ENCODE measurements at regions of chr2 and their contacts with region 1.

Region 1: GRCh38 chr2:131492418-131493198 is 411 bp upstream of the MZT2A start:
- DNase-seq: peak; percentile 96
- H3K4me3 Mint-ChIP-seq: peak overlapping the region; percentile 98
- H3K27ac Mint-ChIP-seq: peak overlapping the region; percentile 95
- H3K4me1 Mint-ChIP-seq: peaks cover 43% of the 10 kb centered on the region
- H3K27me3 Mint-ChIP-seq: no peaks in the 10 kb centered on the region

Region 2: GRCh38 chr2:131105156-131105949 is 387.3 kb before region 1 on chr2 and contains the start of gene PLEKHB2:
- CTCF ChIA-PET with region 1: interaction called, 6 read pairs
- POLR2A ChIA-PET with region 1: no interaction called
- intact Hi-C with region 1: loop called (anchors 2 kb)
- DNase-seq: peak; percentile 95
- H3K4me3 Mint-ChIP-seq: peak within 1 kb of the TSS; percentile 85
- H3K27ac Mint-ChIP-seq: peak within 1 kb of the TSS; percentile 89
- H3K4me1 Mint-ChIP-seq: peaks cover 42% of the 10 kb centered on the region
- H3K27me3 Mint-ChIP-seq: no peaks in the 10 kb centered on the region
- total RNA-seq, gene PLEKHB2: 50.0 to 52.2 TPM

Region 3: GRCh38 chr2:131413148-131413747 is 79.4 kb before region 1 on chr2:
- CTCF ChIA-PET with region 1: interaction called, 6 read pairs
- POLR2A ChIA-PET with region 1: no interaction called
- intact Hi-C with region 1: loop called (anchors 2 kb)
- DNase-seq: no peak
- H3K4me3 Mint-ChIP-seq: no peak overlapping the region
- H3K27ac Mint-ChIP-seq: no peak overlapping the region
- H3K4me1 Mint-ChIP-seq: no peaks in the 10 kb centered on the region
- H3K27me3 Mint-ChIP-seq: peaks cover 49% of the 10 kb centered on the region

Region 4: DNA sequence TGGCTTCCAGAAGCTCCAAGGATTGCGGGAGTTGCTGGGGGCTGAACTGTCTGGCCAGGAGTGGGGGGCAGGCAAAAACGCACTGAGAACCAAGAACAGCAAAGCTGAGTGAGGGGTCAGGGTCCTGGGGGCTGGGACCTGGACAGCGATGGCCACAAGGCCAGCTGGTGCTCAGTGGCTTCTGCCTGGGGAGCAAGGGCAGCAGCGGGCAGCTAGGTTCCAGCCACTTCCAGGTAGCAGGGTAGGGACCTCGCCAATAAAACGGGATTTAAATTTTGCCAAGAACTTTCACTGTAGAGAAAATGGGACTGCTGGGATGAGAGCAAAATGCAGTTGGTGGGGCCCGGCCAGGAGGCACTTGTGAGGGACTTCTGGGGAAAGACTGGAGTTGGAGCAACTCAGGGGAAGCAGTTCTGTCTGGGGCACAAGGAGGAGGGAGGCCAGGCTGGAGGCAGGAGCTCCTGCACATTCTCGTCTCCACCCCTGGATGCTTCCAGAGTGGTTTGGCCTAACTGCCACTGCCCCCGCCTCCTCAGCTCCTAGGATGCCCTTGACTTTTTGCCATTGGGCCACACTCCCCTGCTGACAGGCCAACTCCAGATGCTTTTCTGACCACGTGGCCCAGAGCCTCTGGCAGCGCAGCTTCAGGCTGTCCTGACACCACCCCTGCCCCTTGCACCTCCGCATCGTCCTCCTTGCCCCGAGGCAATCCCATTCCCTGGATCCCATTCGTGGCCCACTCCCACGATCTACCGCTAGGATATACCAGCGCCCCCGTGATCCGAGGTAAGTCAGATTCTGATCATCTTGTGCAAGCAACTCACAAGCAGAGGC is 29.6 kb after region 1 on chr2:
- CTCF ChIA-PET with region 1: no interaction called
- POLR2A ChIA-PET with region 1: no interaction called
- intact Hi-C with region 1: loop called (anchors 1 kb)
- DNase-seq: no peak
- H3K4me3 Mint-ChIP-seq: no peak overlapping the region
- H3K27ac Mint-ChIP-seq: no peak overlapping the region
- H3K4me1 Mint-ChIP-seq: peaks cover 2% of the 10 kb centered on the region
- H3K27me3 Mint-ChIP-seq: no peaks in the 10 kb centered on the region

Region 5: DNA sequence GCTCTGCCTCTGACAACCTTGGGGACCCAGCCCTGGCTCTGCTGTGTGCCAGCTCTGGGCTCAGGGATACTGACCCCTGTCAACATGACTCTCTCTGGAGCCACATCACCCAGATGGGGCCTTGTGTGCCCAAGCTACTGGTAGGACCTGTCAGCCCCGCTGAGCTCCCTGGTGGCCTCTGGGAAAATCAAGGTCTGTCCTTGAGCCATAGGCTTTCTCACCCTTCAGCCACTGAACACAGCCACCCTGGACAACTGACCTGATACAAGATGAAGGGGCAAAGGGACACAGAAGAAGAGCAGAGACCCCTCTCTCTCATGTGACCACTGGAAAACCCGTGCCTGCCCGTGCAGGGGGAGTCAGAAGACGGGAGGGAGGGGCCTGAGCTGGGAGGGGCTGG is 42.9 kb after region 1 on chr2:
- CTCF ChIA-PET with region 1: no interaction called
- POLR2A ChIA-PET with region 1: no interaction called
- intact Hi-C with region 1: no loop called
- DNase-seq: no peak
- H3K4me3 Mint-ChIP-seq: no peak overlapping the region
- H3K27ac Mint-ChIP-seq: no peak overlapping the region
- H3K4me1 Mint-ChIP-seq: no peaks in the 10 kb centered on the region
- H3K27me3 Mint-ChIP-seq: no peaks in the 10 kb centered on the region

Region 6: DNA sequence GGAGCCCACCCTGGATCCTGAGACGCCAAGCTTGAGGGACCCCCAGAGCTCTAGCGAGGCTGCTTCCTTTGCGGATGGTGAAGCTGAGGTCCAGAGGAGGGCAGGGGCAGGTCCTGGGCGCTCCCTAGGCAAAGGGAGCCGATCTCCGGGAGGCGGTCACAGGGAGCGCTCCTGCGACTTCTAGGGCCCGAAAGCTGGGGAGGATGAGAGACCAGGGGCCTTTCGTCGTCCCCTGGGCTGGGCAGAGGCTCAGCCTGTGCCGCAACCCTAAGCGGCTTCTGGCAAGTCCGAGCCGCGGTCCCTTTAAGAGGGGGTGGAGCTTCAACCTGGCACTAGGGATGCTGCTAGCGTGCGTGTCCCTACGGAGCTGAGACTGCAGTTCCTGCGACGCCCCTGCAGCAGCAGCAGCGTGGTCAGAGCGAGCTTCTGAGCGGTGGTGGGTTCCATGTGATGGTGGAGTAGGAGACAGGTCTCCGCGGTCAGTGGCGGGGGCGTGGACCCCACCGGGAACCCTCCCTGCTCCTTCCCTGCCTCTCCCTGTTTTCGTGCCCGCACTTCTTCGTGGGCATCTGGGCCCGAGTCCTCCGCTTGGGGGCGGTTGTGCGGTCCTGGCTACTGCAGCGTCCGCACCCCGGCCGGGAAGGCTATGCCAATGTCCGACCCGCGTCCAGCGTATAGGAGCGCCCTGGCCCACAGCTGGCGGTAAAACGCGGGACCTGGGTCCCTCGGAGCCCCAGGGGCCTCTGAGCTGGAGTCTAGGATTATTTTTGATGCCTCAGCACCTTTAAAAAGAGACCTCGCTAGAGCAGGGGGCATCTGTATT is 189.7 kb after region 1 on chr2:
- CTCF ChIA-PET with region 1: interaction called, 10 read pairs
- POLR2A ChIA-PET with region 1: no interaction called
- intact Hi-C with region 1: no loop called
- DNase-seq: peak; percentile 84
- H3K4me3 Mint-ChIP-seq: peak overlapping the region; percentile 79
- H3K27ac Mint-ChIP-seq: peak overlapping the region; percentile 56
- H3K4me1 Mint-ChIP-seq: peaks cover 33% of the 10 kb centered on the region
- H3K27me3 Mint-ChIP-seq: peaks cover 3% of the 10 kb centered on the region